GM18951 (cell line): ENCODE measurements at regions of chr19 and their contacts with region 1.

Region 1: GRCh38 chr19:46990991-46991676 is 28.5 kb upstream of the NPAS1 start:
- POLR2A ChIP-seq: no peak

Region 2: GRCh38 chr19:46753420-46754155 is 237.5 kb before region 1 on chr19:
- in situ Hi-C with region 1: loop called (anchors 25 kb)
- POLR2A ChIP-seq: no peak

Region 3: DNA sequence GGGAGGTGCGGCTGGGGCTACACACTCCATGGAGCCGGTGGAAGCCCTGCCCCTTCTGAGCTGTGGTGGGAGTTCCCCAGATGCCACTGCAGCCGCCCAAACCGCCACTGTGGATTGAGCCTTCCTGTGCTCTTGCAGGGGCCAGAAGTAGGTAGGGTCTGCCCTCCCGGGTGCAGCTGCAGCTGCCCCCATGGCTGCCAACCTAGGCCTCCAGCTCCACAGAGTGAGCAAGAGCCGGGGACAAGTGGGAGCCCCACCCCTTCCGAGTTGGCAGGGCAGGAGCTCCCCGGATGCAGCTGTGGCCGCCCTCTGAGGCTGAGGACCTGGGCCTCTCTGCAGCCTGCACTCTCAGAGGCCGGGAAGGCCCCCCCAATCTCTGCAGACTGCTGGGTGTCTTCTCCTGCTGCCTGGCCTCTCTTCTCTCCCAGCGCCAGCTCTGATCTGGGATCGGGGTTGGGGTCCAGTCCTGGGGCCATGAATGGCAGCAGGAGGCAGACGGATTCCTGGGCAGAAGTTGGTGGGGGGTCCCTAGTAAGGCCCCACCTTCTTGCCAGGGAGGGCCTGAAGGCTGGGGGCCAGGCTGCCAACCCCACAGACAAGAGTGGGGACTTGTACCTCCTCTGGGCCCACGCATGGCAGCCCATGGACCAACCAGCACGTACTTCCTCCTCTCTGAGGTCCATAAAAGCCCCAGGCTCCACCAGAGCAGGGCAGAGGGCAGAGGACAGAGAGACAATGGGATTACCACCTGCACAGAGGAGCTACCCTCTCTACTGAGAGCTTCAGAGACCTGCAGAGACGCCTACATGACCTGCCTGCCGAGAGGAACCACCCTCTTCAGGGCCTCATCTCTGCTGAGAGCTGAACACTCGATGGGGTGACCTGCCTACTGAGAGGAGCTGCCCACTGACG is 169.4 kb before region 1 on chr19:
- in situ Hi-C with region 1: no loop called
- POLR2A ChIP-seq: peak; percentile 40

Region 4: DNA sequence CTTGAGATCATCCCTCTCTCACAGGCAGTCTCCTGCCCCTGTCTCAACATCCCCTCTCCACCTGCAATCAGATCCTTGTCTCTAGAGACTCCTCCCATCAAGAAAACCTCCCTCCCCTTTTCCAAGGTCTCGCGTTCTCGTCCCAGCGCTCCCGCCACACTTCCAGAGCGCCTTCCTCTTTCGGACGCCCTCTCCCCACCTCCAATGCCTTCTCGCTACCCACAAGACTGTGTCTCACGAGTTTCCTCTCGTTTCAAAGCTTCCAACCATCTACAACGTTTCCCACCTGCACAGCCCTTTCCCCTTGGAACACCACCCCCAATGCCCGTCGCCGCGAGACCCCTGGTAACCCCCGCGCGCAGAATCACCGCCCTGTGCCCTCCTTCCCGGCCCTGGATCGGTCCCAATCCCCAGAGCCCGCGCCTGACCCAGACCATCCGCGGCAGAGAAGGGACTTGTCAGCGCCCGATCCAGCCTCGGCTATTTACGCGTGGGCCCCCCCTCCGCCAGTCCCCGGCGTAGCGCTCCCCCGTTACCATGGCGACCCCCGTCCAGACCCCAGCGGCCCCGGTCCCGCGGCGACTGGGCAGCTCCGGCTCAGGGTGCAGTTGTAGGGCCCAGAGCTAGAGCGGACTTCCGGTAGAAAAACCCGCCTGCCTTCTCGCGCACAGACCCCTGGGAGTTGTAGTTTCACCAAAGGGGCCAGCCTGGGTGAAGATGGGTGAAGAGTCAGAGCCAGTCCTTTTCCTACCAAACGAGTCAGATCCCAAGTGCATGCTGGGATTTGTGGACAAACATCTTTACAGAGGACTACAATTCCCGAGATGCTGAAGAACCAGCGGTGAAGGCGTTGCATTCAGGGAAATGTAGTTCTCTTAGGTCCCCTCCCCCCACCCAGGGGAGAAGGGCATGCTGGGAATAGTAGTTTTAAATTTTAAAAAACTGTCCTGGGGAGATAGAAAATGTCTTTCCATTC is 140.6 kb before region 1 on chr19 and contains the start of gene AP2S1:
- in situ Hi-C with region 1: loop called (anchors 10 kb)
- POLR2A ChIP-seq: peak; percentile 83

Region 5: DNA sequence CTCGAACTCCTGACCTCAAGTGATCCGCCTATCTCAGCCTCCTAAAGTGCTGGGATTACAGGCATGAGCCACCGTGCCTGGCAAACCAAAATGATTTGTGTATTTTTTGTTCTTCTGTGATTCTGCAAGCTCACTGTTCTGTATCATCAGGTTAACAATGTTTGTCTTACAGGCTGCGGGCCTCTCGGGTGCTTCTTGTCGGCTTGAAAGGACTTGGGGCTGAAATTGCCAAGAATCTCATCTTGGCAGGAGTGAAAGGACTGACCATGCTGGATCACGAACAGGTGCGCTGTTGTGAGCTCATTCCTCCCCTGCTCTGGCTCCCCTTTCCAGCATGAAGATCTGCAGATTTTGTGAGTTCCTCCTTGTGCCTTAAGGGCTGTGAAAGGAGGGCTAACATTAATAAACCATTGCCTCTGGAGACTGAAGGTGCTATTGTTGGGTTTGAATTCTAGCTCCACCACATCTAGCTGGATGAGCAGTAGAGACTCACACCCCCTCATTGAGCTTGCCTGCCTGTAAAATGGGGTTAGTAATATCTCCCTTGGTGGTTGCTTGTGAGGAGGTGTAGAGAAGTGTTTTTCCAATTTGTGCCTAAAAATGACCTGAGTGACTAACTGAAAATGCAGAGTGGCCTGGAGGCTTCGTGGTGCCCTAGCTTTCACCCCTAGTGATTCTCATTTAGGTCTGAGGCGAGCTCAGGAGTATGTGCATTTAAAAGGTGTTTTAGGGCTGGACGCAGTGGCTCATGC is 152.4 kb after region 1 on chr19:
- in situ Hi-C with region 1: no loop called
- POLR2A ChIP-seq: no peak